K562 (cell line): ENCODE measurements at regions of chr1 and their contacts with region 1.

Region 1: GRCh38 chr1:89820422-89821321 is at the start of gene LRRC8D:
- DNase-seq: peak; percentile 85 to 89 (median 88)
- ATAC-seq: peak; percentile 81
- H3K4me3 ChIP-seq: peak within 1 kb of the TSS; percentile 77
- H3K27ac ChIP-seq: peak within 1 kb of the TSS; percentile 85
- H3K4me1 ChIP-seq: peaks cover 18 to 22% of the 10 kb centered on the region in 2 experiments; a peak in 4 of 5 replicates
- H3K27me3 ChIP-seq: no peaks in the 10 kb centered on the region
- CTCF ChIP-seq: 0 out of 6 replicates have a peak, but pooled peaks of 1 of the 3 experiments have one; percentile 6
- EP300 ChIP-seq: no peak
- POLR2A ChIP-seq: peak; percentile 62
- RAD21 ChIP-seq: no peak
- polyA plus RNA-seq, gene LRRC8D: 3.4 to 7.8 TPM

Region 2: GRCh38 chr1:89649783-89650182 is 170.9 kb before region 1 on chr1:
- CTCF ChIA-PET with region 1: no interaction called
- POLR2A ChIA-PET with region 1: no interaction called
- in situ Hi-C with region 1: no loop called
- intact Hi-C with region 1: no loop called
- DNase-seq: no peak
- ATAC-seq: no peak
- H3K4me3 ChIP-seq: no peak overlapping the region
- H3K27ac ChIP-seq: no peak overlapping the region
- H3K4me1 ChIP-seq: peaks cover 0 to 6% of the 10 kb centered on the region in 2 experiments; a peak in 2 of 5 replicates
- H3K27me3 ChIP-seq: no peaks in the 10 kb centered on the region
- CTCF ChIP-seq: no peak
- EP300 ChIP-seq: no peak
- POLR2A ChIP-seq: no peak
- RAD21 ChIP-seq: no peak

Region 3: GRCh38 chr1:89757532-89757931 is 63.1 kb before region 1 on chr1:
- CTCF ChIA-PET with region 1: no interaction called
- POLR2A ChIA-PET with region 1: no interaction called
- in situ Hi-C with region 1: no loop called
- intact Hi-C with region 1: no loop called
- DNase-seq: no peak
- ATAC-seq: peak; percentile 50
- H3K4me3 ChIP-seq: no peak overlapping the region
- H3K27ac ChIP-seq: no peak overlapping the region
- H3K4me1 ChIP-seq: peaks cover 3 to 6% of the 10 kb centered on the region in 2 experiments; a peak in 4 of 5 replicates
- H3K27me3 ChIP-seq: no peaks in the 10 kb centered on the region; a peak in 1 of 5 replicates
- CTCF ChIP-seq: no peak
- EP300 ChIP-seq: peak; percentile 36; the same call in 1 of the 2 replicates
- POLR2A ChIP-seq: no peak
- RAD21 ChIP-seq: no peak

Region 4: DNA sequence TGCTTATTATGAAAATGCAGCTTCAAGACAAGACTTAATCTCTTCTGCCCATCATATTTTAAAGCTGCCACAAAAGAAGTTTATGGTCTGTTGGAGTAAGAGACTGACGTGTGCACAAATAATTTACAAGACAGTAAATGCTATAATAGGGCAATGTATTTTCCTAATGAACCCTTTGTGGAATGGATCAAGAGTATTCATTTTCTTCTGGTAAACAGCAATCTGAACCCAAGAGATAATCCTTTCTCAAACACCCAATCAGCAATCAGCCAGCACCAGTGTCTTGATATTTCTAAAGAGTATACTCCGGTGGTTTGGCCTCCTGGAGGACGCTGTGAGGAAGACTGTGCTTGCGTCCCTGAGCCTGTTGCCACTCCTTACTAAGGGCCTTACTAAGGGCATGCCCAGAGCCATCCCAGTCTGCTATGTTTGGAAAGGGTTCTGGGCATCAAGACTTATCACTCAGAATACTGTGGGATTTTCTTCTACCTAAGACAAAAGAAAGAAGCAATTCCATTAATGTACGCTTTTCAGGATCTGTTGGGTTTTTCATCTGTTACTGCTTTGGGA is 48.6 kb before region 1 on chr1:
- CTCF ChIA-PET with region 1: no interaction called
- POLR2A ChIA-PET with region 1: no interaction called
- in situ Hi-C with region 1: no loop called
- intact Hi-C with region 1: no loop called
- DNase-seq: peak in 1 of 4 experiments; percentile 22
- ATAC-seq: peak; percentile 84
- H3K4me3 ChIP-seq: no peak overlapping the region
- H3K27ac ChIP-seq: no peak overlapping the region
- H3K4me1 ChIP-seq: no peaks in the 10 kb centered on the region
- H3K27me3 ChIP-seq: no peaks in the 10 kb centered on the region; a peak in 1 of 5 replicates
- CTCF ChIP-seq: no peak
- EP300 ChIP-seq: no peak
- POLR2A ChIP-seq: no peak
- RAD21 ChIP-seq: no peak

Region 5: DNA sequence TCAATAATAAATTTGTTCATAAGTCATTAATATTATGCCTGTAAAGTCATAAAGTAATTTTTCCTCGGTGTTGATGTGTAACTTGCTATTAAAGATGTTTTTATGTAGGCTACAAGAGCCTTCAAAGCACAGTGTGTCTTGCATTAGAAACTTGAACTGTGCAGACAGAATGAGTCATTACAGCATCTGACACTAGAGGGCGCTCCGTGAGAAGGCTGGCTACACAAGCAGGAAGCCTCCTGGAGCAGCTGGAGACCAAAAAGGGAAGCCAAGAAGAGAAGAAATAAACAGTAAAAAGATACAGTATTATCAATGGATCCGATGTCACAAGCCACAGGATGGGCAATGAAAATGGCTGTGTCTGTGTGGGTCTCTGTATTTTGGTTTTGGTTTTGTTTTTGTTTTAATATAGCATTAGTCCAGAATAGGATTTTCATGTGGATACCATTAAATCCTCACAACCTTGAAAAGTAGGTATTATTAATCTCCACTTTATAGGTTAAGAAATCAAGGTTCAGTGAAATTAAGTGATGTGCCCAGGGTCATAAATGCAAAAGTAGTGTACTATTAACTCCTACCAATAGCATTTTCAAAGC is 15.9 kb before region 1 on chr1:
- CTCF ChIA-PET with region 1: no interaction called
- POLR2A ChIA-PET with region 1: interaction called, 22 read pairs
- in situ Hi-C with region 1: no loop called
- intact Hi-C with region 1: no loop called
- DNase-seq: peak; percentile 76 to 91 (median 79)
- ATAC-seq: peak; percentile 95
- H3K4me3 ChIP-seq: no peak overlapping the region
- H3K27ac ChIP-seq: no peak overlapping the region
- H3K4me1 ChIP-seq: peaks cover 4 to 23% of the 10 kb centered on the region in 2 experiments; a peak in 4 of 5 replicates
- H3K27me3 ChIP-seq: no peaks in the 10 kb centered on the region
- CTCF ChIP-seq: peak; percentile 92 to 96 (median 93)
- EP300 ChIP-seq: 0 out of 2 replicates have a peak, but pooled peaks have one; percentile 8
- POLR2A ChIP-seq: no peak
- RAD21 ChIP-seq: peak; percentile 98 to 99

Region 6: GRCh38 chr1:89896105-89896942 is 75.7 kb after region 1 on chr1:
- CTCF ChIA-PET with region 1: no interaction called
- POLR2A ChIA-PET with region 1: interaction called, 3 read pairs
- in situ Hi-C with region 1: no loop called
- intact Hi-C with region 1: loop called (anchors 2 kb)
- DNase-seq: peak; percentile 82 to 96 (median 87)
- ATAC-seq: peak; percentile 84
- H3K4me3 ChIP-seq: peak overlapping the region; percentile 9; the same call in 1 of the 2 replicates
- H3K27ac ChIP-seq: peak overlapping the region; percentile 99
- H3K4me1 ChIP-seq: peaks cover 27 to 94% of the 10 kb centered on the region in 2 experiments
- H3K27me3 ChIP-seq: no peaks in the 10 kb centered on the region
- CTCF ChIP-seq: peak in 1 of 3 experiments; percentile 9; a peak in 1 of 6 replicates
- EP300 ChIP-seq: peak; percentile 91
- POLR2A ChIP-seq: peak; percentile 65; the same call in 1 of the 2 replicates
- RAD21 ChIP-seq: peak in 1 of 2 experiments; percentile 21; a peak in 1 of 4 replicates

Region 7: GRCh38 chr1:89941110-89941770 is 120.6 kb after region 1 on chr1:
- CTCF ChIA-PET with region 1: no interaction called
- POLR2A ChIA-PET with region 1: interaction called, 6 read pairs
- in situ Hi-C with region 1: no loop called
- intact Hi-C with region 1: loop called (anchors 2 kb)
- DNase-seq: peak; percentile 30 to 78 (median 54)
- ATAC-seq: peak; percentile 82
- H3K4me3 ChIP-seq: no peak overlapping the region
- H3K27ac ChIP-seq: peak overlapping the region; percentile 41; the same call in 1 of the 3 replicates
- H3K4me1 ChIP-seq: peaks cover 4 to 52% of the 10 kb centered on the region in 2 experiments; a peak in 4 of 5 replicates
- H3K27me3 ChIP-seq: no peaks in the 10 kb centered on the region
- CTCF ChIP-seq: no peak
- EP300 ChIP-seq: peak; percentile 24; the same call in 1 of the 2 replicates
- POLR2A ChIP-seq: no peak
- RAD21 ChIP-seq: no peak

Region 8: GRCh38 chr1:90308421-90308820 is 487.7 kb after region 1 on chr1:
- CTCF ChIA-PET with region 1: no interaction called
- POLR2A ChIA-PET with region 1: no interaction called
- in situ Hi-C with region 1: no loop called
- intact Hi-C with region 1: no loop called
- DNase-seq: no peak
- ATAC-seq: no peak
- H3K4me3 ChIP-seq: no peak overlapping the region
- H3K27ac ChIP-seq: no peak overlapping the region
- H3K4me1 ChIP-seq: no peaks in the 10 kb centered on the region
- H3K27me3 ChIP-seq: no peaks in the 10 kb centered on the region
- CTCF ChIP-seq: no peak
- EP300 ChIP-seq: no peak
- POLR2A ChIP-seq: no peak
- RAD21 ChIP-seq: no peak